Activated CD4-positive, alpha-beta memory T cell treated with anti-CD3 and anti-CD28 coated beads, Interleukin-2, amount 10 ng/mL, durations not matched to agents 7 days and 5 days (primary cell): ENCODE measurements at regions of chr2 and their contacts with region 1.

Region 1: GRCh38 chr2:158034199-158034866 is 67.3 kb upstream of the UPP2 start:
- DNase-seq: no peak
- H3K4me3 Mint-ChIP-seq: no peak overlapping the region
- H3K27ac Mint-ChIP-seq: no peak overlapping the region
- H3K4me1 Mint-ChIP-seq: no peaks in the 10 kb centered on the region
- H3K27me3 Mint-ChIP-seq: peaks cover 18% of the 10 kb centered on the region

Region 2: GRCh38 chr2:158317642-158318041 is 283.3 kb after region 1 on chr2:
- CTCF ChIA-PET with region 1: no interaction called
- POLR2A ChIA-PET with region 1: no interaction called
- DNase-seq: no peak
- H3K4me3 Mint-ChIP-seq: no peak overlapping the region
- H3K27ac Mint-ChIP-seq: no peak overlapping the region
- H3K4me1 Mint-ChIP-seq: no peaks in the 10 kb centered on the region
- H3K27me3 Mint-ChIP-seq: no peaks in the 10 kb centered on the region

Region 3: GRCh38 chr2:158745044-158745865 is 710.9 kb after region 1 on chr2:
- CTCF ChIA-PET with region 1: interaction called, 13 read pairs
- POLR2A ChIA-PET with region 1: no interaction called
- DNase-seq: peak; percentile 35
- H3K4me3 Mint-ChIP-seq: no peak overlapping the region
- H3K27ac Mint-ChIP-seq: no peak overlapping the region
- H3K4me1 Mint-ChIP-seq: no peaks in the 10 kb centered on the region
- H3K27me3 Mint-ChIP-seq: peaks cover 15% of the 10 kb centered on the region

Region 4: DNA sequence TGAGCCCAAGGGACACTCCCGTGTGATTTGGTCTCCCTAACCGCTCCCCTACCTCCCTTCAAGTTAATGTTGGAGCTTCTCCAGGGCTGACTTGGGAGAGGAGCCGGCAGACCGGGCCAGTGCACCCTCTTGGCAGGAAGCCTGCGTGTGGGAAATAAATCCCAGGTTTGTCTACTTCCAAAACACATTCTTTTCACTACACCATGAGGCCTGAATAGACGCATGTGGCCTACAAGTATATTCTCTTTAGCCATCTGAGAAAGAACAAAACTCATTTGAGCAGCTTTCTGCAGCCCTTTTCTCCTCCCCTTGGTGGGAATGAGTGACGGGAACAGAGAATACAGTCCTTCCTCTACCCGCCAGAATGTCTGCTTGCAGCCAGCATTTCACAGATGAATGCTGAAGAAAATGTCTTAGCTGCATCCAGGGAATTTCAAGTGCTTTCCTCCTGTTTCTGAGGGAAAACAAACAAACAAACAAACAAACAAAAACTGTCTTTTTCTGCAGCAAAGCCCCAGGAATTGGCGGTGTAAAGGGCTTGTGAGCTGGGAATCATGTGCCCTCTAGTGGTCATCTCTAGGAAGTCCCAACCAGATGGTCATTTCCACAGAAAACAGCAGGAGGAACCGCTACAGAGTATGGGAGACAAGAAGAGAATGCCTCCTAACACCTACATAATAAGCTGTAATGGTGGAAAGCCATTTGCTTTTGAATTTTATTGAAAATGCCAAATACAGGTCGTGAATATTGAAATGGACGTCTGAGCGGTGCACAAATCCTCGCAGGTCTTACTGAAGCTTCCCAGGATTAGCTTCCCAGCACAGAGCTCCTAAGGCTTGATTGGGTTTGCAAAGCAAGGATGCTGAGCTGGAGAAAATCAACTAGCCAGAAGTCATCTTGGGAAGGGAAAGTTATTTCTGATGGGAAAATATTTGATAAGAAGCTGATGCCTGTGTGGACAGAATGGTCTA is 719.6 kb after region 1 on chr2:
- CTCF ChIA-PET with region 1: interaction called, 20 read pairs
- POLR2A ChIA-PET with region 1: no interaction called
- DNase-seq: peak; percentile 21
- H3K4me3 Mint-ChIP-seq: no peak overlapping the region
- H3K27ac Mint-ChIP-seq: no peak overlapping the region
- H3K4me1 Mint-ChIP-seq: no peaks in the 10 kb centered on the region
- H3K27me3 Mint-ChIP-seq: peaks cover 19% of the 10 kb centered on the region